ENCODE measurements at regions of chr21 and their contacts with region 1.

Region 1: GRCh38 chr21:33641336-33642026 is at the start of gene CRYZL1:
- DNase-seq: peak; percentile 100
- H3K4me3 ChIP-seq: peak within 1 kb of the TSS; percentile 85 to 90
- H3K27ac ChIP-seq: peak within 1 kb of the TSS; percentile 87 to 92
- H3K4me1 ChIP-seq: peaks cover 7% of the 10 kb centered on the region
- H3K27me3 ChIP-seq: no peaks in the 10 kb centered on the region
- CTCF ChIP-seq: no peak
- POLR2A ChIP-seq: peak; percentile 50
- total RNA-seq, gene CRYZL1: 40.6 to 73.2 TPM

Region 2: DNA sequence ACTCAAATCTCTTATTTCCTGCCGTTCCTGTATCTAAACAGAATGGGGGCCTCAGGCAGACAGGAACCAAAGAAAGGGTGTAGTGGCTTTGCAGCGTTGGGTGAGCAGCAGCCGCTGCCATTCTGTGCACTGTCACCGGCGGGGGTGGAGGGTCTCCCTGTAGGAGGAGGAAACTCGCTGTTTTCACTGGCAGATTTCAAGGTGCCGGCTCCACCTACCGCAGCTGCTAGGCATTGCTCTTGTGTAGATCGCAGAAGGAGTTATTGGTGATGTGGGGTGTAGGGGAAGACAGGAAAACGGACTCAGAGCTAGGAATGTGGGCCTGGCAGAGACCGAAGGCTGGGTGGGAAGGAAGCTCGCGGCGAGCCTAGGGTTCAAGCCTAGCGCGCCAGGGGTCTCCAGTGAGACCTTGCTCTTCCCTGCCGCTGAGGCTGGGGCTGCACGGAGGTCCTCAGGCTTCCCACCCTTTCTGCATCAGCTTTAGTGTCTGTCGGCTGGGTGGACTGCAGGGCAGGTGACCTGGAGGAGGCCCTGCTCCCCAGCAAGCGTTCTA is 253.3 kb after region 1 on chr21:
- intact Hi-C with region 1: loop called (anchors 5 kb)
- DNase-seq: peak; percentile 89
- H3K4me3 ChIP-seq: no peak overlapping the region
- H3K27ac ChIP-seq: peak overlapping the region in 1 of 2 donors; percentile 1
- H3K4me1 ChIP-seq: peaks cover 15% of the 10 kb centered on the region
- H3K27me3 ChIP-seq: no peaks in the 10 kb centered on the region
- CTCF ChIP-seq: peak; percentile 61 to 72 (median 67)
- POLR2A ChIP-seq: no peak